ENCODE measurements at regions of chr3 and their contacts with region 1.

Region 1: DNA sequence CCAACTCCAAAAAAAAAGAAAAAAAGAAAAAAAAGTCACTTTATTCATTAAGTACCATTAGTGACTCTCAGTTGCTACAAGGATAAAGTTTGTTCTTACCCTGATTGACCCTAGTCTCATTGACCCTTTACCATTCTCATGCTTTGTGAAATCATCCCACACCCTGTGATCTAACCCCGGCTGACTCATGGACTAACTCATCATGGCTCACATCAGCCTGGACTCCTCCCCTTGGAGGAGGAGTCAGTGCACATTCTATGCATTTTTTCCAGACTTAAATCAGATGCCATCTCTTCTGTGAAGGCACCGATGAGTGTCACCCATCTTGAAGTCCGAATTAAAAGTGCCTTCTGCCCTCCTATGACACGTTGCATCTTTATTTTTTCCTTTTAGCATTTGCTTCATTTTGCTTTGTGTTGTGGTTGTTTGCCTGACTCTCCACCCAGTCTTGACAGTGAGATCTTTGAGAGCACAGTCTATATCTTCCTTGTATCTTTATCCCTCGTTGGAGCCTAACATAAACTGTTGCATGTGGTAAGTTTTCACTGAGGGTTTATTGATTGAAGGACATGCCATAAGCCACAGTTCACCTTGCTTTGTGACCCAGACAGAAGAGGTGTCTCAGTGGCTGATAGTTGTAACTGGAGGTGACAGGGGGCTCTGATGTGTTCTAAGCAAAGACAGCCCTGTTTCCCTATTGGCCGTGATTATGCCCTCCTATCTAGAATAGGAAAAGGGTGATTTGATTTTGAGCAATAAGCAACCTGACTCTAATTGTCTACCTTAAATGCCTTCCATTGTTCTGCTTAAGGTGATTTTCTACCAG is 72.1 kb downstream of the IL1RAP start:
- DNase-seq: peak; percentile 82
- ATAC-seq: peak; percentile 87
- H3K4me3 Mint-ChIP-seq: peak overlapping the region; percentile 51
- H3K27ac Mint-ChIP-seq: peak overlapping the region; percentile 96
- H3K4me1 Mint-ChIP-seq: peaks cover 41% of the 10 kb centered on the region
- H3K27me3 Mint-ChIP-seq: no peaks in the 10 kb centered on the region

Region 2: GRCh38 chr3:190566043-190566933 is 19.7 kb before region 1 on chr3:
- CTCF ChIA-PET with region 1: no interaction called
- POLR2A ChIA-PET with region 1: interaction called, 3 read pairs
- intact Hi-C with region 1: loop called (anchors 1 kb)
- DNase-seq: peak; percentile 92
- ATAC-seq: peak; percentile 88
- H3K4me3 Mint-ChIP-seq: no peak overlapping the region
- H3K27ac Mint-ChIP-seq: peak overlapping the region; percentile 97
- H3K4me1 Mint-ChIP-seq: peaks cover 61% of the 10 kb centered on the region
- H3K27me3 Mint-ChIP-seq: no peaks in the 10 kb centered on the region